K562 (cell line): ENCODE measurements at regions of chr6 and their contacts with region 1.

Region 1: DNA sequence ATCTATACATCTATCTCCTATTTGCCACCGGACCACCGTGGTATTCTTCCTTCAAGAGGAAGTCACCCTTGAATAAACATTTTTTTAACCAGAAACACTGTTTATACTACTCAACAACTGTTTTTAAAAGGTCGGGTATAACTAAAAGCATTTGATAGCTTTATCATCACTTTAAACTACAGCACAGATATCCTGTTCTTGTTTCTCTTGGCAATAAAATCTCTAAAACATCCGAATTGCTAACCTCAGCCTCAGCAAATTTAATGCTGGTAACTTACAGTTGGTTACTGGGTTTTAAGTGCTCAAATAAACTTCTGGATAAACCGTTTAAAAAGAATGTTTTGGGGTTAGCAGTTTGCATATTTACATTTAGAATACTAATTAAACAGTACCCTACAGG is 20.4 kb downstream of the ZUP1 start:
- DNase-seq: no peak
- ATAC-seq: no peak
- H3K4me3 ChIP-seq: no peak overlapping the region
- H3K27ac ChIP-seq: no peak overlapping the region
- H3K4me1 ChIP-seq: no peaks in the 10 kb centered on the region
- H3K27me3 ChIP-seq: no peaks in the 10 kb centered on the region
- CTCF ChIP-seq: no peak
- EP300 ChIP-seq: no peak
- POLR2A ChIP-seq: no peak
- RAD21 ChIP-seq: no peak

Region 2: DNA sequence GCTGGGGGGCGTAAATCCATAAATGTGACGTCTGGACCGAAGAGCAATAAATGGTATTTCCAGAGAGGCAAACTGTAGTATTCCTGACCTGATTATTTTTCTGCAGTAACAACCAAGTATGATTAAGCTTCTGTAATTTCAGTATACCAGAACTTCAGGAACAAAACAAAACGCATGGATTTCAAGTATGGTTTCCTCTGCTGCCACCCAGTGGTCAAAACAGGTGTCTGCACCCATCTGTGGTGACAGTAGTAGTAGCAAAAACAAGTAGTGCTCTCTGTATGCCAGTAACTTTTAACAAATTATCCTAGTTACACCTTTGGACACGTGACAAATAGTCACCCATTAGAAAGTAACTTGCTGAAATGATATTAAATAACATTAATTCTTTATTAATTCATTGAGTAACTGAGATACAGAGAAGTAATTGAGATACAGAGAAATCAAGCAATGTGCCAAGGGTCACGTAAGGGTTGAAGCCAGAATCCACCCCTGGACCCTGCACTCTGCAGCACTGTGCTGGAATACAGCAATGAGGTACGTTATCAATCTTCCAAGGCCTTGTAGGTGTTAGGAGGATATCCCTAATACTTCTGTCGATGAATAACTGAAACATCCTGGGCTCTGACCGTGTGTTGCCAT is 86.7 kb before region 1 on chr6:
- CTCF ChIA-PET with region 1: interaction called, 6 read pairs
- POLR2A ChIA-PET with region 1: no interaction called
- in situ Hi-C with region 1: no loop called
- intact Hi-C with region 1: loop called (anchors 2 kb)
- DNase-seq: peak; percentile 62 to 84 (median 67)
- ATAC-seq: peak; percentile 82
- H3K4me3 ChIP-seq: no peak overlapping the region
- H3K27ac ChIP-seq: no peak overlapping the region
- H3K4me1 ChIP-seq: peaks cover 15 to 17% of the 10 kb centered on the region in 2 experiments; a peak in 4 of 5 replicates
- H3K27me3 ChIP-seq: no peaks in the 10 kb centered on the region
- CTCF ChIP-seq: peak; percentile 76 to 88 (median 84)
- EP300 ChIP-seq: no peak
- POLR2A ChIP-seq: no peak
- RAD21 ChIP-seq: peak; percentile 81 to 85

Region 3: GRCh38 chr6:116579143-116579542 is 69.0 kb before region 1 on chr6:
- CTCF ChIA-PET with region 1: no interaction called
- POLR2A ChIA-PET with region 1: no interaction called
- in situ Hi-C with region 1: no loop called
- intact Hi-C with region 1: loop called (anchors 5 kb)
- DNase-seq: no peak
- ATAC-seq: no peak
- H3K4me3 ChIP-seq: no peak overlapping the region
- H3K27ac ChIP-seq: no peak overlapping the region
- H3K4me1 ChIP-seq: no peaks in the 10 kb centered on the region
- H3K27me3 ChIP-seq: no peaks in the 10 kb centered on the region
- CTCF ChIP-seq: no peak
- EP300 ChIP-seq: no peak
- POLR2A ChIP-seq: no peak
- RAD21 ChIP-seq: no peak

Region 4: DNA sequence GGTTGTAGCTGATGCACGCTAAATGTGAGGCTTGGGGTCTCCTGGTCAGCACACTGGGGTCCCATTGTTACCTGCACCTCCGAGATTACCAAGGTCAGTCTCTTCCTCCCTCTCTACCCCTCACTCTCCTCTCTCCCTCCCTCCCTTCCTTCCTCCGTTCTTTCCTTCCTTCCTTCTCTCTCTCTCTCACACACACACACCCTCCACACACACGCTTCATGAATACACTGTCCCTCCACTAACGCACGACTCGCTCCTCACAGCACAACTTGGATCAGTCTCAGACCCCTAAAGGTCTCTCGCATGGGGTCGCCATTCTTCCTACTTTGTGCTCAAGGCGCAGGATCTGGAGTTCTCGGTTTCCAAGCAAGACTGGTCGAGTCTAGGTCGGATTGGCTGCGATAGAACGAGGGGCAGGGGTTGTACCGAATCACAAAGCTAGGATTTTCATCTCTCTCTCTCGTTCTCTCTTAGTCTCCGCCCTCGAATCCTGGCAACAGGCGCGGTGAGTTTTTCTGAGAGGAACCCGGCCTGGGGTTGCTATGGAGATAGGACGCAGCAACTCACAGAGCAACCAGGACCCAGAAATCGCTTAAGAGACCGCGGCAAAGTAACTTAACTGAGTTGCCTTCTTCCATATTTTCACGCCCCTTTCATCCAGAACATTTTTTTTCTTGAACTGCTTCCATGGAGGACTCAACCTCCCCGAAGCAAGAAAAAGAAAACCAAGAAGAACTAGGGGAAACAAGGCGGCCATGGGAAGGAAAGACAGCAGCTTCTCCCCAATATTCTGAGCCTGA is 32.0 kb before region 1 on chr6 and contains the start of gene RSPH4A:
- CTCF ChIA-PET with region 1: no interaction called
- POLR2A ChIA-PET with region 1: no interaction called
- in situ Hi-C with region 1: no loop called
- intact Hi-C with region 1: loop called (anchors 2 kb)
- DNase-seq: peak; percentile 40 to 78 (median 64)
- ATAC-seq: peak; percentile 97
- H3K4me3 ChIP-seq: peak within 1 kb of the TSS; percentile 24
- H3K27ac ChIP-seq: no peak within 1 kb of the TSS
- H3K4me1 ChIP-seq: peaks cover 0 to 4% of the 10 kb centered on the region in 2 experiments; a peak in 2 of 5 replicates
- H3K27me3 ChIP-seq: peaks cover 0 to 7% of the 10 kb centered on the region in 2 experiments; a peak in 1 of 5 replicates
- CTCF ChIP-seq: peak in 1 of 3 experiments; percentile 27; a peak in 1 of 6 replicates
- EP300 ChIP-seq: no peak
- POLR2A ChIP-seq: no peak
- RAD21 ChIP-seq: peak in 1 of 2 experiments; percentile 5; a peak in 1 of 4 replicates
- polyA plus RNA-seq, gene RSPH4A: 0.07 to 0.08 TPM

Region 5: GRCh38 chr6:116737004-116737403 is 88.8 kb after region 1 on chr6:
- CTCF ChIA-PET with region 1: no interaction called
- POLR2A ChIA-PET with region 1: no interaction called
- in situ Hi-C with region 1: no loop called
- intact Hi-C with region 1: no loop called
- DNase-seq: no peak
- ATAC-seq: no peak
- H3K4me3 ChIP-seq: no peak overlapping the region
- H3K27ac ChIP-seq: no peak overlapping the region
- H3K4me1 ChIP-seq: no peaks in the 10 kb centered on the region
- H3K27me3 ChIP-seq: no peaks in the 10 kb centered on the region
- CTCF ChIP-seq: no peak
- EP300 ChIP-seq: no peak
- POLR2A ChIP-seq: no peak
- RAD21 ChIP-seq: no peak